Activated naive CD4-positive, alpha-beta T cell treated with anti-CD3 and anti-CD28 coated beads for 36 hours (primary cell): ENCODE measurements at regions of chr19 and their contacts with region 1.

Region 1: GRCh38 chr19:1592755-1593500 is at the start of gene MBD3:
- DNase-seq: peak; percentile 84
- H3K4me3 Mint-ChIP-seq: peak within 1 kb of the TSS; percentile 96
- H3K27ac Mint-ChIP-seq: peak within 1 kb of the TSS; percentile 82
- H3K4me1 Mint-ChIP-seq: peaks cover 20% of the 10 kb centered on the region
- H3K27me3 Mint-ChIP-seq: no peaks in the 10 kb centered on the region
- total RNA-seq, gene MBD3: 58.1 to 63.7 TPM

Region 2: DNA sequence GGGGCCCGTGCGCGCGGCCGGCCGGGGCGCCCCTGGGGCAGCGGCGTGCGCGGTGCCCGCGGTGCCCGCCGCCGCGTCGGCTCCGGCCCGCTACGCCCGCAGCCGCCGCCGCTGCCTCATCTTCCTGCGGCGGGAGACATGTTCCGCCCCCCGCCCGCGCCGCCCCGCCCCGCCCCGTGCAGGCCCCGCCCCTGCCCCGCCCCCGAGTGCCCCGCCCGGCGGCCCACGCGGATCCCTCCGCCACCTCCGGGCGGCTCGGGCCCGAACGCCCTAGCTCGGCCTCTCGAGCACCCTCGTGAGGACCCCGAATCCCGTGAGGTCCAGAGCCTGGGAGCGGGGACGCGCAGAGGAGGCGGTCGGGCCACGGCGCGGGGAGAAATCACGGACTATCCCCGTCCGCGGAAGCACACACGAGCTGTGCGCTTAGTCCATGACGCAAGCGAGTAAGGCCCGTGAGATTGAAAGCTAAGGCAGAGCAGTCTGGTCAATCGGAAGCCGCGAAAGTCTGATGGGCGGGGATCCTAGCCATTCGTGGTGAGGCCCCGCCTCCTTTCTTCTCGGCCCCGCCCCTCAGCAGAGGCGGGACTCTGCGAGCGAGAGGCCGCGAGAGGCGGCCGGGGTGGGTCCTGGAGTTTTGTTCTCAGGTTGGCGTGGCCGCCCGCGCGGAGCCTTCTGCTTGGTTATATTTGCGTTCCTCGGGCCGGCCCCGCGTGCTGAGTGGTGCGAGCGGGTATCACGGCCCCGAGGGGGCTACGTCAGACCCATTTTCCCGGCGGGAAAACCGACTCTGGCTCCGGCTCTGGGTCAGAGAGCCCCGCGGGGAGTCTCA is 59.8 kb after region 1 on chr19 and contains the start of gene TCF3:
- CTCF ChIA-PET with region 1: interaction called, 3 read pairs
- intact Hi-C with region 1: loop called (anchors 1 kb)
- DNase-seq: peak; percentile 98
- H3K4me3 Mint-ChIP-seq: peak within 1 kb of the TSS; percentile 82
- H3K27ac Mint-ChIP-seq: peak within 1 kb of the TSS; percentile 89
- H3K4me1 Mint-ChIP-seq: peaks cover 19% of the 10 kb centered on the region
- H3K27me3 Mint-ChIP-seq: no peaks in the 10 kb centered on the region
- total RNA-seq, gene TCF3: 84.8 to 86.7 TPM

Region 3: DNA sequence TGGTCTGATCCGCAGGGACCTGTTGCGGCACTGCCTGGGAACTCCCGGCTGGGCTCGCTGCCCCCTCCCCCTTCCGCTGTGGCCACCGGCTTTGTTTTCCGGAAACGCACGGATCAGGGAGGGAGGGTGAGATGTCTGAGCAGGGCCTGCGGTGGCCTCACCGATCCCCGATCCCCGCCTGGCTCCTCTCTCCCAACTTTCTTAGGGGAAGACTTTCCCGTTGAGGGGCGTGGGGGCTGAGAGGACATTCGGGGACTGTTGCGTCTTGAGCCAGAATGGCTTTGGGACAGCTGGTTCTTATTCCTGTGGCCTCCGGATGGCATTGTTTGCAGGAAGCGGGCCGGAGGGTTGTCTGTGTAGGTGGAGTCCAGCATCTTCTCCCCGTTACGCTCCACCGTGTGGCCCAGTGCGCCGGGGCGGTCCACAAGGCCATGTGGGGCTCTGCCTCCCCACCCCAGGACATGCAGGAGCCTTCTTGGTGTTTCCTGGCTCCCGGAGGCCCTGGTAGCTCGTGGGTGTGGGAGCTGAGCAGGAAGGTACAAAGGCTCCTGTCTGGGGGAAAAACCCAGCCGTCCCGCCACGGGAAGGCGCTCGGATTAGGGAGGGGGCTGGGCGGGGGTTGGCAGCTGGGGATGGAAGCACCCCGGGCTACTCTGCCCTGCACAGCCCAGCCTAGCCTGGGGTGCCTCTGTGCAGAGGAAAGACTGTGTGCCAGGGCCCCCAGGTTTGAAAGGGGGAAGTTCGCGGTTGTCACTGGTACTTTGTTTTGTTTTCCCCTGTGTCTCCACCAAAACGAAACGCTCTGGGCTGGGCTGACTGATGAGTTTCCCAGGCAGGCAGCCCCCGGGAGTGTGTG is 349.4 kb after region 1 on chr19:
- CTCF ChIA-PET with region 1: no interaction called
- intact Hi-C with region 1: no loop called
- DNase-seq: peak; percentile 89
- H3K4me3 Mint-ChIP-seq: peak overlapping the region; percentile 91
- H3K27ac Mint-ChIP-seq: peak overlapping the region; percentile 92
- H3K4me1 Mint-ChIP-seq: peaks cover 31% of the 10 kb centered on the region
- H3K27me3 Mint-ChIP-seq: no peaks in the 10 kb centered on the region